GM12878 (cell line): ENCODE measurements at regions of chr15 and their contacts with region 1.

Region 1: DNA sequence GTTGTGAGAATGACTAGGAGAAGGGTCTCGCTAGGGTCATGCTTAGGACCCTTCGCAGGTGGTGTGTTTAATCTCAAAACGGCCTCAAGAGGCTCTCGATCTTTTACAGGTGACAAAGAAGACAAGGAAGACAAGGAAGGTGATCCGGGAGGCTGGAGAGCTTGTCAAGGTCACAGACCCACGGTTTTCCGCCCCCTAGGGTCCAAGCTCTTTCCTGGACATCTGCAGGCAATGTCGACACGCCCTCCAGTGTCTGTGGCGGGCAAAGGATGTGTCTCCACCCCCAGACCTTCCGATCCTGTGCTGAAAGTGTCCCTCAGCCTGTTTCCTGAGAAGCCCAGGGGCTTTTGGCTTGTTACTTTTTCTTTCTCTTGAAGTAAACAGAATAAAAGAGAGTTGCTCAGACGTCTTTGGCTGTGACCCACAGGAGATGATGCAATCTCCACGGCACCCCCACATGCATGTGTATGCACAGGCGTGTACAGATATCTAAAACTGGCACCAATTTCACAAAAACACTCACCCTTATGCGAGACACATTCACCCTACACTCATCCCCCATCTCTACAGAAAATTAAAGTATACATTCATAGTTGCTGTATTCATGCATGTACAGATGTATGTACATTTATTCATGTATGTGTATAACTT is 108.8 kb downstream of the KLF13 start:
- DNase-seq: peak; percentile 87
- ATAC-seq: peak; percentile 85
- H3K4me3 ChIP-seq: peak overlapping the region; percentile 48
- H3K27ac ChIP-seq: peak overlapping the region; percentile 95
- H3K4me1 ChIP-seq: peaks cover 50% of the 10 kb centered on the region
- H3K27me3 ChIP-seq: no peaks in the 10 kb centered on the region
- CTCF ChIP-seq: peak; percentile 85 to 100 (median 92); a peak in 5 of 6 replicates
- EP300 ChIP-seq: peak in 1 of 2 experiments; percentile 43; a peak in 1 of 4 replicates
- POLR2A ChIP-seq: peak; percentile 31
- RAD21 ChIP-seq: peak; percentile 86

Region 2: GRCh38 chr15:31172606-31173005 is 262.8 kb before region 1 on chr15:
- CTCF ChIA-PET with region 1: no interaction called
- POLR2A ChIA-PET with region 1: no interaction called
- RAD21 ChIA-PET with region 1: no interaction called
- SMC1A ChIA-PET with region 1: no interaction called
- in situ Hi-C with region 1: no loop called
- intact Hi-C with region 1: no loop called
- DNase-seq: no peak
- ATAC-seq: no peak
- H3K4me3 ChIP-seq: no peak overlapping the region
- H3K27ac ChIP-seq: no peak overlapping the region
- H3K4me1 ChIP-seq: peaks cover 23% of the 10 kb centered on the region
- H3K27me3 ChIP-seq: no peaks in the 10 kb centered on the region
- CTCF ChIP-seq: no peak
- EP300 ChIP-seq: no peak
- POLR2A ChIP-seq: no peak
- RAD21 ChIP-seq: no peak

Region 3: DNA sequence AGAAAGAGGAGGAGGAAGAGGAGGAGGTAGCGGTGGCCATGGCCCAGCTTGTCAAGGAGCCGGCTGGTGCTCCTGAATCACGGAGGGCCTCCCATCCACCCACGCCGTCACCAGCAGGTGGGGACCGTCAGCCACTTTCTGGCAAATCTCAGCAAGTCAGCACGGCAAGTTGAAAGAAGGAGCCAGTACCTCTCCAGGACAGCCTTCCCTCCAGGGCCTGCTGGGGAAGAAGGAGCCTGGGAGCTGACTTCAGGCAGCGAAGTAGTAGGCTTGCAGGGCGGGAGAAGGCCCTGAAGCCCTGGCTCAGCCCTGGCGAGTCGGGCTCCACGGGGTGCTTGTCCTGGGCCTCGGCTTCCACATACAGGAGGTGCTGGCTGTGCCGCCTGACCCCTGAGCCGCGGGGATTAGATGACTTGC is 234.6 kb before region 1 on chr15:
- CTCF ChIA-PET with region 1: interaction called, 47 read pairs
- POLR2A ChIA-PET with region 1: interaction called, 6 read pairs
- RAD21 ChIA-PET with region 1: interaction called, 45 read pairs
- SMC1A ChIA-PET with region 1: interaction called, 41 read pairs
- in situ Hi-C with region 1: loop called (anchors 5 kb)
- intact Hi-C with region 1: loop called (anchors 2 kb)
- DNase-seq: no peak
- ATAC-seq: peak; percentile 83
- H3K4me3 ChIP-seq: no peak overlapping the region
- H3K27ac ChIP-seq: no peak overlapping the region
- H3K4me1 ChIP-seq: peaks cover 30% of the 10 kb centered on the region
- H3K27me3 ChIP-seq: no peaks in the 10 kb centered on the region
- CTCF ChIP-seq: peak; percentile 61 to 88 (median 74)
- EP300 ChIP-seq: no peak
- POLR2A ChIP-seq: no peak
- RAD21 ChIP-seq: peak; percentile 79

Region 4: DNA sequence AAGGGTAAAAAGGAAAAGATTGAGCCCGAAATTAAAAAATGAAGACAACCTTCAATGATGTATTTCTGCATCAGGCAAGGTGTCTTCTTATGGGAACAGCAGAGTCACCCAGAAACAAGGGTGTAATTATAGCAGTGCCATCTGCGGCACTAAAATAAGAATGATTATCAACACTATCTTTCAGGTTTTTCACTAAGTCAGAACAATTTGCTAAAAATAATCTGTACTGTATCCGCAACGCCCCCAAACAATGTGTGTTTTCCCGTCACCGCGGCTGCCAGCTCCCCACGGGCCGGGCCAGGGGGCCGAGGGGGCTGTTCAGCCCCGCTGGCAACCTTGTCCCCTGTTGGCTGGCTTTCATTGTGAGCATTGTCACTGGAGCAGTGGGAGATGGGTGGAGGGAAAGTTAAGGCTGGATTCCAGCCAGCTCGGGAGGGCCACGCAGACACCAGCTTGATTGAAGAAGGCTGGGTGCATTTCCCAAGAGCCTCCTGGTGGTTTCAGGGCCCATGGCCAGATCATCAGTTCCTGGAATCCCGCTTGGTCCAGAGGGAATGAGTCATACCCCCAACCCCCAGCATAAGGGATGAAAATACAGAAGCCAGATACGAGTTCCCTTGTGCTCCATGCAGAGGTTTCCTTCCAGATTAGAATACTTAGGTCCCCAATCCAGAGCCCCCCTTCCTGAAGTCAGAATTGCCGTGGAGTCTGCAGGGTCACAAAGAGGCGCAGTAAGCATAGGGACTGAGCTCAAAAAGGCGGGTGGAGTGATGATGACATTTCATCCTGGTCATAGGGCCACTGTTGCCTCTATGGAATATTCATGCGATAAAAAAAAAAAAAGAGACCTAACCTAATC is 199.0 kb before region 1 on chr15:
- CTCF ChIA-PET with region 1: interaction called, 6 read pairs
- POLR2A ChIA-PET with region 1: interaction called, 6 read pairs
- RAD21 ChIA-PET with region 1: interaction called, 15 read pairs
- SMC1A ChIA-PET with region 1: interaction called, 8 read pairs
- in situ Hi-C with region 1: no loop called
- intact Hi-C with region 1: no loop called
- DNase-seq: no peak
- ATAC-seq: peak; percentile 82
- H3K4me3 ChIP-seq: no peak overlapping the region
- H3K27ac ChIP-seq: peak overlapping the region; percentile 92
- H3K4me1 ChIP-seq: peaks cover 44% of the 10 kb centered on the region
- H3K27me3 ChIP-seq: no peaks in the 10 kb centered on the region
- CTCF ChIP-seq: no peak
- EP300 ChIP-seq: peak; percentile 80 to 92
- POLR2A ChIP-seq: no peak
- RAD21 ChIP-seq: no peak

Region 5: DNA sequence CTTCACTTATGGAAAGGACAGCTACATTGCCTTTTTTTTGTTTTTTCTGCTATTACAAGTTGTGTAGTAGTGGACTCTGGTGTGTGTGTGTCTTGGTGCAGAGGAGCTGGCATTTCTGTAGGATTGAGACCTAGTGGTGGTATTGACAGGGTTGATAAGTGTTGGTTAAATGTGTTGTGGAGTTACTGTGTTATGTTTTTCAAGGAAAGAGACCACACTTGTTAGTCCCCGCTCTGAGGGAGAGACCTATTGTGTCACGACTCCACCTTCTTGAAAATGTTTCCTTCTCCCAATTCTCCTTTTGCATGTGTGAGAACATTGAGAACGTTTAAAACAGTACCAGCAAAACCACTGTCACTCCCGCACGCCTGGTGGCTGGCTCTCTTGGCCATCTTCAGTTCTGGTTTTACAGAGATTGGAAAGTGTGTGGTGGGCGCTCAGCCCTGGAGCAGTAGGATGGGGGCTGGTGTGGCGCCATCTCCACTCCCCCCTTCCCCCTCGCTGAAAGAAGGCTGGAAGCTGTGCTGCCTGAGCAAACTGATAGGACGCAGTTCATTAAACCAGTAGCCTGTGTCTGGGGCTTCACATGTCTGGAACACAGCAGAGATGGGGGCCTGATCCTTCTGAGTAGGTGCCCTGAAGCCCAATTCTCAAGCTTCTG is 103.2 kb before region 1 on chr15:
- CTCF ChIA-PET with region 1: interaction called, 10 read pairs
- POLR2A ChIA-PET with region 1: no interaction called
- RAD21 ChIA-PET with region 1: interaction called, 52 read pairs
- SMC1A ChIA-PET with region 1: interaction called, 7 read pairs
- in situ Hi-C with region 1: no loop called
- intact Hi-C with region 1: loop called (anchors 2 kb)
- DNase-seq: no peak
- ATAC-seq: no peak
- H3K4me3 ChIP-seq: peak overlapping the region; percentile 91
- H3K27ac ChIP-seq: peak overlapping the region; percentile 62
- H3K4me1 ChIP-seq: peaks cover 63% of the 10 kb centered on the region
- H3K27me3 ChIP-seq: no peaks in the 10 kb centered on the region
- CTCF ChIP-seq: no peak
- EP300 ChIP-seq: no peak
- POLR2A ChIP-seq: no peak
- RAD21 ChIP-seq: no peak

Region 6: GRCh38 chr15:31352911-31353811 is 82.2 kb before region 1 on chr15:
- CTCF ChIA-PET with region 1: interaction called, 24 read pairs
- POLR2A ChIA-PET with region 1: interaction called, 5 read pairs
- RAD21 ChIA-PET with region 1: interaction called, 20 read pairs
- SMC1A ChIA-PET with region 1: interaction called, 13 read pairs
- in situ Hi-C with region 1: no loop called
- intact Hi-C with region 1: no loop called
- DNase-seq: peak; percentile 83
- ATAC-seq: peak; percentile 87
- H3K4me3 ChIP-seq: peak overlapping the region; percentile 52; the same call in 1 of the 2 replicates
- H3K27ac ChIP-seq: peak overlapping the region; percentile 93
- H3K4me1 ChIP-seq: peaks cover 89% of the 10 kb centered on the region
- H3K27me3 ChIP-seq: no peaks in the 10 kb centered on the region
- CTCF ChIP-seq: peak in 2 of 3 experiments; percentile 7 to 22; a peak in 2 of 6 replicates
- EP300 ChIP-seq: peak; percentile 57 to 70; a peak in 3 of 4 replicates
- POLR2A ChIP-seq: peak; percentile 48; the same call in 1 of the 2 replicates
- RAD21 ChIP-seq: no peak

Region 7: DNA sequence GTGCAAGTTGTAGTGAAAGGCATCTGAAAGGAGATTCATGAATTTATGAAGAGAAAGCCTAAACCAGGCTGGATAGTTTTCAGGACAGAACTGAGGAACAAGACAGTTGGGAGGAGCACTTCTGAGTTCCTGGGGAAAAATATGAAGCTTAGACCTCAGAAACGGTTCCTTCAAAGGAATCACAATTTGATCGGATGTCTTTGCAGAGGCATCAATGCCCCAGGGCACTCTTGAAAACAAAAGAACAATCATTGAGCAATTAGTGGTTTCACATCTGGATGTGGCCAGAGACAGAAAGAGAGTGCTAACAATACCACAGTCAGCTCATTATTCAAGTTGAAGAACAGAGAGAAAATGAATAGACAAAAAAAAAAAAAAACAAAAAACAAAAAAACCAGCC is 22.6 kb before region 1 on chr15:
- CTCF ChIA-PET with region 1: interaction called, 7 read pairs
- POLR2A ChIA-PET with region 1: no interaction called
- RAD21 ChIA-PET with region 1: interaction called, 3 read pairs
- SMC1A ChIA-PET with region 1: interaction called, 11 read pairs
- in situ Hi-C with region 1: no loop called
- intact Hi-C with region 1: no loop called
- DNase-seq: no peak
- ATAC-seq: 0 out of 3 replicates have a peak, but pooled peaks have one; percentile 31
- H3K4me3 ChIP-seq: no peak overlapping the region
- H3K27ac ChIP-seq: no peak overlapping the region
- H3K4me1 ChIP-seq: no peaks in the 10 kb centered on the region
- H3K27me3 ChIP-seq: no peaks in the 10 kb centered on the region
- CTCF ChIP-seq: no peak
- EP300 ChIP-seq: no peak
- POLR2A ChIP-seq: no peak
- RAD21 ChIP-seq: no peak

Region 8: GRCh38 chr15:31488426-31489204 is 53.2 kb after region 1 on chr15:
- CTCF ChIA-PET with region 1: interaction called, 336 read pairs
- POLR2A ChIA-PET with region 1: interaction called, 5 read pairs
- RAD21 ChIA-PET with region 1: interaction called, 213 read pairs
- SMC1A ChIA-PET with region 1: interaction called, 166 read pairs
- in situ Hi-C with region 1: loop called (anchors 5 kb)
- intact Hi-C with region 1: loop called (anchors 1 kb)
- DNase-seq: peak; percentile 78
- ATAC-seq: peak; percentile 73
- H3K4me3 ChIP-seq: no peak overlapping the region
- H3K27ac ChIP-seq: peak overlapping the region; percentile 49
- H3K4me1 ChIP-seq: peaks cover 18% of the 10 kb centered on the region
- H3K27me3 ChIP-seq: no peaks in the 10 kb centered on the region
- CTCF ChIP-seq: peak; percentile 71 to 93 (median 91)
- EP300 ChIP-seq: no peak
- POLR2A ChIP-seq: no peak
- RAD21 ChIP-seq: peak; percentile 84

Region 9: GRCh38 chr15:31598620-31599019 is 163.2 kb after region 1 on chr15:
- CTCF ChIA-PET with region 1: no interaction called
- POLR2A ChIA-PET with region 1: no interaction called
- RAD21 ChIA-PET with region 1: no interaction called
- SMC1A ChIA-PET with region 1: no interaction called
- in situ Hi-C with region 1: no loop called
- intact Hi-C with region 1: no loop called
- DNase-seq: no peak
- ATAC-seq: no peak
- H3K4me3 ChIP-seq: no peak overlapping the region
- H3K27ac ChIP-seq: no peak overlapping the region
- H3K4me1 ChIP-seq: no peaks in the 10 kb centered on the region
- H3K27me3 ChIP-seq: no peaks in the 10 kb centered on the region
- CTCF ChIP-seq: no peak
- EP300 ChIP-seq: no peak
- POLR2A ChIP-seq: no peak
- RAD21 ChIP-seq: no peak